Caco-2 (cell line): ENCODE measurements at regions of chr5 and their contacts with region 1.

Region 1: DNA sequence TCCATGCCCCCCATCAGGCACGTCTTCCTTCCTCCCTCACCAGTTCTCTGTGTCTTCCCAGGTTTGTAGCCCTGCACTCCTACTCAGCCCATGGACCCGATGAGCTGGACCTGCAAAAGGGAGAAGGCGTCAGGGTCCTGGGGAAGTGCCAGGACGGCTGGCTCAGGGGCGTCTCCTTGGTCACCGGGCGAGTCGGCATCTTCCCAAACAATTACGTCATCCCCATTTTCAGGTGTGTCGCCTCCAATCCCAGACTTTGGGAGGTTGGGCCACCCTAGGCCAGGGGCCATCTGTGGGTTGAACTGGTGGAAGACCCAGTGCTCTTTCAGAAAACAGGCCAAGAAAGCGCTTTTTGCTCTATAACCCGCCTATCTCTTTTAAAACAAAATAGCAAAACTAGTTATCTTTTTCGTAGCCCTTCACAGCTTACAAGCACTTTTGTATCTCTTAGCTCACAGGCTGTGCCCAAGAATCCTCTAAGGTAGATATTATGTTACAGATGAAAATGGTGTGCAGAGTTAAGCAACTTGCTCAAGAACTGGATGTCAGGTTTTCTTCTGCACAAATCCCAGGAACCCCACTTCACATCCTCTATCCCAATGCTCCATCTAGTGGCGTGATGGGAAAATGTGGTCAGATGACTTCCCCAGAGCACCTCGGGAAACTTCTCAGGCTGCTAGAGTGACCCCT is 56.2 kb downstream of the PLAC8L1 start:
- DNase-seq: peak; percentile 58 to 75
- H3K4me3 ChIP-seq: no peak overlapping the region
- H3K4me3 Mint-ChIP-seq: no peak overlapping the region
- H3K27ac Mint-ChIP-seq: peak overlapping the region; percentile 14
- H3K4me1 ChIP-seq: peaks cover 30% of the 10 kb centered on the region
- H3K4me1 Mint-ChIP-seq: peaks cover 38% of the 10 kb centered on the region
- H3K27me3 ChIP-seq: no peaks in the 10 kb centered on the region
- H3K27me3 Mint-ChIP-seq: no peaks in the 10 kb centered on the region
- CTCF ChIP-seq: peak; percentile 80

Region 2: GRCh38 chr5:145697251-145697990 is 351.7 kb before region 1 on chr5:
- CTCF ChIA-PET with region 1: no interaction called
- POLR2A ChIA-PET with region 1: no interaction called
- intact Hi-C with region 1: loop called (anchors 2 kb)
- DNase-seq: peak in 1 of 2 experiments; percentile 40
- H3K4me3 ChIP-seq: no peak overlapping the region
- H3K4me3 Mint-ChIP-seq: no peak overlapping the region
- H3K27ac Mint-ChIP-seq: no peak overlapping the region
- H3K4me1 ChIP-seq: no peaks in the 10 kb centered on the region
- H3K4me1 Mint-ChIP-seq: no peaks in the 10 kb centered on the region
- H3K27me3 ChIP-seq: no peaks in the 10 kb centered on the region
- H3K27me3 Mint-ChIP-seq: no peaks in the 10 kb centered on the region
- CTCF ChIP-seq: peak; percentile 44 to 64

Region 3: GRCh38 chr5:145834917-145835847 is 214.0 kb before region 1 on chr5 and contains the start of gene PRELID2:
- CTCF ChIA-PET with region 1: no interaction called
- POLR2A ChIA-PET with region 1: no interaction called
- intact Hi-C with region 1: loop called (anchors 1 kb)
- DNase-seq: peak; percentile 96 to 97
- H3K4me3 ChIP-seq: peak within 1 kb of the TSS; percentile 82
- H3K4me3 Mint-ChIP-seq: peak within 1 kb of the TSS; percentile 72
- H3K27ac Mint-ChIP-seq: peak within 1 kb of the TSS; percentile 79
- H3K4me1 ChIP-seq: peaks cover 19% of the 10 kb centered on the region
- H3K4me1 Mint-ChIP-seq: peaks cover 23% of the 10 kb centered on the region
- H3K27me3 ChIP-seq: no peaks in the 10 kb centered on the region
- H3K27me3 Mint-ChIP-seq: no peaks in the 10 kb centered on the region
- CTCF ChIP-seq: peak; percentile 23 to 24
- total RNA-seq, gene PRELID2: 26.0 and 28.7 TPM in 2 replicates

Region 4: GRCh38 chr5:145936401-145937131 is 112.6 kb before region 1 on chr5 and contains the start of gene SH3RF2:
- CTCF ChIA-PET with region 1: no interaction called
- POLR2A ChIA-PET with region 1: no interaction called
- intact Hi-C with region 1: loop called (anchors 1 kb)
- DNase-seq: peak; percentile 83 to 89
- H3K4me3 ChIP-seq: peak within 1 kb of the TSS; percentile 61
- H3K4me3 Mint-ChIP-seq: peak within 1 kb of the TSS; percentile 82
- H3K27ac Mint-ChIP-seq: peak within 1 kb of the TSS; percentile 78
- H3K4me1 ChIP-seq: peaks cover 54% of the 10 kb centered on the region
- H3K4me1 Mint-ChIP-seq: peaks cover 43% of the 10 kb centered on the region
- H3K27me3 ChIP-seq: no peaks in the 10 kb centered on the region
- H3K27me3 Mint-ChIP-seq: no peaks in the 10 kb centered on the region
- CTCF ChIP-seq: no peak
- total RNA-seq, gene SH3RF2: 49.4 and 55.0 TPM in 2 replicates

Region 5: GRCh38 chr5:146018514-146019375 is 30.4 kb before region 1 on chr5:
- CTCF ChIA-PET with region 1: no interaction called
- POLR2A ChIA-PET with region 1: no interaction called
- intact Hi-C with region 1: loop called (anchors 2 kb)
- DNase-seq: no peak
- H3K4me3 ChIP-seq: no peak overlapping the region
- H3K4me3 Mint-ChIP-seq: no peak overlapping the region
- H3K27ac Mint-ChIP-seq: no peak overlapping the region
- H3K4me1 ChIP-seq: peaks cover 33% of the 10 kb centered on the region
- H3K4me1 Mint-ChIP-seq: peaks cover 35% of the 10 kb centered on the region
- H3K27me3 ChIP-seq: no peaks in the 10 kb centered on the region
- H3K27me3 Mint-ChIP-seq: no peaks in the 10 kb centered on the region
- CTCF ChIP-seq: no peak

Region 6: DNA sequence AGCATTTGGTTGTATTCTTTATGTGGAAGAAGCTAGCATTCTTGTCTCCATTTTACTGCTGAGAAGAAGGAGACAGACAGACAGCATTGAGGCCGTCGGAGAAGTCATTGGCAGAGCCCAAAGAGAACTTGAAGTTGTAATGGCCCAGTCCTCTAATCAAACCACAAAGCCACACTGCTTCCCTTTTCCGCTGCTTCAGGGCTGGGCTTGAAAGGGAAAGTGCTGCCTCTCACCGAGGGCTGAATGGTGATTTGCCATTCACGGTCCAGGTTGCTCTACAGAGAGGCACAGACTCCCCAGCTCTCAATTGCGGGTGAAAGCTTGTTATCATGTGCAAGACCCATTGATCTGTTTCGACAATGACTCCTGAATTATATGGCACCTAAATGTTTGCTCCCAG is 263.9 kb after region 1 on chr5:
- CTCF ChIA-PET with region 1: no interaction called
- POLR2A ChIA-PET with region 1: no interaction called
- intact Hi-C with region 1: no loop called
- DNase-seq: no peak
- H3K4me3 ChIP-seq: no peak overlapping the region
- H3K4me3 Mint-ChIP-seq: no peak overlapping the region
- H3K27ac Mint-ChIP-seq: no peak overlapping the region
- H3K4me1 ChIP-seq: no peaks in the 10 kb centered on the region
- H3K4me1 Mint-ChIP-seq: no peaks in the 10 kb centered on the region
- H3K27me3 ChIP-seq: no peaks in the 10 kb centered on the region
- H3K27me3 Mint-ChIP-seq: peaks cover 29% of the 10 kb centered on the region
- CTCF ChIP-seq: no peak